GM12878 (cell line): ENCODE measurements at regions of chr5 and their contacts with region 1.

Region 1: GRCh38 chr5:59799668-59800346 is 93.7 kb downstream of the PDE4D start:
- DNase-seq: peak; percentile 24
- ATAC-seq: peak; percentile 79
- H3K4me3 ChIP-seq: no peak overlapping the region; the same call in 1 of the 2 replicates
- H3K27ac ChIP-seq: no peak overlapping the region
- H3K4me1 ChIP-seq: peaks cover 11% of the 10 kb centered on the region; the same call in 1 of the 2 replicates
- H3K27me3 ChIP-seq: no peaks in the 10 kb centered on the region
- CTCF ChIP-seq: peak; percentile 41 to 71 (median 58); a peak in 5 of 6 replicates
- EP300 ChIP-seq: no peak
- POLR2A ChIP-seq: no peak
- RAD21 ChIP-seq: peak; percentile 82

Region 2: DNA sequence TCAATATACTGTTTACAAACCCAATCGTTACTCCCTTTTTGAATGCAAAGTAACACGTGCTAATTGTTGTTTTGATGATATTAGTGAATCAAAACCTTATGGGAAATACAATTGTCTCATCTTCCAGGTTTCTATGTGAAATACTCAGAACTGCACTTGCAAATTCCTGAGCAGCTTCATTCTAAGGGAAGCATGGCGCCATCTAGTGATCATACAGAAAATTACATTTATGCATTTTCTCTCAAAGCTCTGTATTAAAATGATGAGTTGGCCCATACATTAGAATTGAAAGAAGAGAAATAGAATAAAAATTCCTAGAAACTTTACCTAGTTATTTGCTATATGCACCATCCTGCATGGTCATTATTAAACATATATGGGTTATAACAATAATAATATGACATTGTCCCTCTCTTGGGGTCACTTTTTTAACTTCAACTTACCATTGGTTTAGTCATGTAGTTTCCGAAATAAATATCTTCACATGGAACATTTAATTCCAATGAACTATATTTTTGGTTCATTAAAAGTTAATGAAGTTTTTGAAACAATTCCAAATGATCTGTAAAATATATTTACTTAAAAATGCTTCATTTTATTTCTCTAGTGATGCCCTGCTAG is 126.3 kb before region 1 on chr5:
- CTCF ChIA-PET with region 1: interaction called, 15 read pairs
- POLR2A ChIA-PET with region 1: no interaction called
- RAD21 ChIA-PET with region 1: no interaction called
- SMC1A ChIA-PET with region 1: interaction called, 9 read pairs
- in situ Hi-C with region 1: no loop called
- intact Hi-C with region 1: loop called (anchors 2 kb)
- DNase-seq: no peak
- ATAC-seq: peak; percentile 60
- H3K4me3 ChIP-seq: no peak overlapping the region
- H3K27ac ChIP-seq: no peak overlapping the region
- H3K4me1 ChIP-seq: no peaks in the 10 kb centered on the region
- H3K27me3 ChIP-seq: no peaks in the 10 kb centered on the region
- CTCF ChIP-seq: peak; percentile 54 to 76 (median 65); a peak in 5 of 6 replicates
- EP300 ChIP-seq: no peak
- POLR2A ChIP-seq: no peak
- RAD21 ChIP-seq: peak; percentile 90

Region 3: GRCh38 chr5:59724482-59725391 is 75.1 kb before region 1 on chr5:
- CTCF ChIA-PET with region 1: interaction called, 8 read pairs
- POLR2A ChIA-PET with region 1: no interaction called
- RAD21 ChIA-PET with region 1: no interaction called
- SMC1A ChIA-PET with region 1: interaction called, 4 read pairs
- in situ Hi-C with region 1: no loop called
- intact Hi-C with region 1: loop called (anchors 1 kb)
- DNase-seq: no peak
- ATAC-seq: peak; percentile 91
- H3K4me3 ChIP-seq: no peak overlapping the region
- H3K27ac ChIP-seq: no peak overlapping the region
- H3K4me1 ChIP-seq: no peaks in the 10 kb centered on the region
- H3K27me3 ChIP-seq: no peaks in the 10 kb centered on the region
- CTCF ChIP-seq: peak; percentile 68 to 73 (median 71)
- EP300 ChIP-seq: no peak
- POLR2A ChIP-seq: no peak
- RAD21 ChIP-seq: peak; percentile 80

Region 4: GRCh38 chr5:59786334-59786824 is 13.4 kb before region 1 on chr5:
- CTCF ChIA-PET with region 1: interaction called, 13 read pairs
- POLR2A ChIA-PET with region 1: no interaction called
- RAD21 ChIA-PET with region 1: interaction called, 8 read pairs
- SMC1A ChIA-PET with region 1: interaction called, 8 read pairs
- in situ Hi-C with region 1: no loop called
- intact Hi-C with region 1: no loop called
- DNase-seq: no peak
- ATAC-seq: no peak
- H3K4me3 ChIP-seq: no peak overlapping the region
- H3K27ac ChIP-seq: no peak overlapping the region
- H3K4me1 ChIP-seq: no peaks in the 10 kb centered on the region
- H3K27me3 ChIP-seq: no peaks in the 10 kb centered on the region
- CTCF ChIP-seq: no peak
- EP300 ChIP-seq: no peak
- POLR2A ChIP-seq: no peak
- RAD21 ChIP-seq: no peak